Activated CD4-positive, alpha-beta memory T cell treated with anti-CD3 and anti-CD28 coated beads for 36 hours (primary cell): ENCODE measurements at regions of chr5 and their contacts with region 1.

Region 1: DNA sequence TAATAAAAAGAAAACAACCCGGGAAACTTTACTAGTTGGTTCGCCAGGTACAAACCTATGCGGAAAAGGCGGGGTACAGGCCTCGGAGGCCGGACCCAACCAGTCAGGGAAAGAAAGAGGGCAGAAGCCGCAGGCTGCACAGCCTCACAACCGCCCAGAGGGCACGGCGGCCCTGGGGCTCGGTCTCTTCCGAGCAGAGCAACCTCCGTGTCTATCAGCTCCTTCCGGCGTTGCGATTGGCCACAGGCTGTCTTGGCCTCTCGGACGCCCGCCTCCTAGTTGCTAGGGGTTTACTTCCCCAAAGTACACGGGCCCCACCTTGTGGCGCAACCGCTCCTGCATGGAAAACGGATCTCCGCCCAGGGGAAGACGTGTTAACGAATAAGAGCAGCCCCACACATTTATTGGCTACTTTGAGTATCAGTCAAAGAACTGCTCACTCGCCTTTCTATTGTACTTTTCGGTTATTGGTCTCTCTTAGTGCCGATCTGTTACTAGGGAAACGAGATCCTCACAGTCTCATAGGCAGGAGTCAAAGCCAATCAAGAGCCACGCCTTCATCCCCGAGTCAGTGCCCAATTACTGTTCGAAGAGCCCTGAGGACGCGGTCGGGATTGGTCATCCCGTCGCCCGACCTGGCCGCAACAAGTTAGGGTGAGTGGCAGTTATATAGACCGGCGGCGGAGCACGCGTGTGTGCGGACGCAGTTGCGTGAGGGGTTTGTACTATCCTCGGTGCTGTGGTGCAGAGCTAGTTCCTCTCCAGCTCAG is at the start of gene G3BP1:
- DNase-seq: peak; percentile 100
- H3K4me3 Mint-ChIP-seq: peak within 1 kb of the TSS; percentile 85
- H3K27ac Mint-ChIP-seq: peak within 1 kb of the TSS; percentile 75
- H3K4me1 Mint-ChIP-seq: peaks cover 33% of the 10 kb centered on the region
- H3K27me3 Mint-ChIP-seq: no peaks in the 10 kb centered on the region
- total RNA-seq, gene G3BP1: 237 TPM

Region 2: GRCh38 chr5:151213800-151214613 is 557.4 kb before region 1 on chr5:
- CTCF ChIA-PET with region 1: no interaction called
- POLR2A ChIA-PET with region 1: no interaction called
- intact Hi-C with region 1: loop called (anchors 5 kb)
- DNase-seq: peak; percentile 94
- H3K4me3 Mint-ChIP-seq: peak overlapping the region; percentile 82
- H3K27ac Mint-ChIP-seq: peak overlapping the region; percentile 97
- H3K4me1 Mint-ChIP-seq: peaks cover 69% of the 10 kb centered on the region
- H3K27me3 Mint-ChIP-seq: no peaks in the 10 kb centered on the region

Region 3: GRCh38 chr5:151499501-151500035 is 271.9 kb before region 1 on chr5:
- CTCF ChIA-PET with region 1: no interaction called
- POLR2A ChIA-PET with region 1: no interaction called
- intact Hi-C with region 1: no loop called
- DNase-seq: no peak
- H3K4me3 Mint-ChIP-seq: no peak overlapping the region
- H3K27ac Mint-ChIP-seq: no peak overlapping the region
- H3K4me1 Mint-ChIP-seq: peaks cover 5% of the 10 kb centered on the region
- H3K27me3 Mint-ChIP-seq: no peaks in the 10 kb centered on the region

Region 4: DNA sequence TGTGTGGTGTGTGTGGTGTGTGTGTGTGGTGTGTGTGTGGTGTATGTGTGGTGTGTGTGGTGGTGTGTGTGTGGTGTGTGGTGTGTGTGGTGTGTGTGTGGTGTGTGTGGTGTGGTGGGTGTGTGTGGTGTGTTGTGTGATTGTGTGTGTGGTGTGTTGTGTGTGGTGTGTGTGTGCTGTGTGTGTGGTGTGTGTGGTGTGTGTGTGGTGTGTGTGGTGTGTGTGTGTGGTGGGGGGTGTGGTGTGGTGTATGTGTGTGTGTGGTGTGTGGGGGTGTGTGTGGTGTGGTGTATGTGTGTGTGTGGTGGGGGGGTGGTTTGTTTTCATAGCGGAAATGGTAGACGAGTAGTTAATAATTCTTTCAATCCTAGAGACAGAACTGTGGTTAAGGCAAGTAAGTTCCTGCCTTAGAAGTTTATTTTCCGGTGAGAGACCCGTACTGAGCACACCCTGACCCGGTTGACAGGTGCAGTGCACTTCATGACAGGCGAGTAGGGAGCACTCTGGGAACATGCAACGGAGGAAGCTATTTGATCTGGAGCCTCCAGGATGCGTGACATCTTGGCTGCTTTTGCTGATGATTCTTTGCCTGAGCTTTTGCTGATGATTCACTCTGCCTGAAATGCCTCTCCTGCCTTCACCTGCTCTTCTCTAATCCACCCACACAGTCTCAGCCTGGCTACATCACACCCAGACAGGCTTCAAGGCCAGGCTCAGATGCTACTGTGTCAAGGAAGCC is 158.6 kb before region 1 on chr5:
- CTCF ChIA-PET with region 1: interaction called, 4 read pairs
- POLR2A ChIA-PET with region 1: no interaction called
- intact Hi-C with region 1: loop called (anchors 1 kb)
- DNase-seq: peak; percentile 75
- H3K4me3 Mint-ChIP-seq: peak overlapping the region; percentile 24
- H3K27ac Mint-ChIP-seq: peak overlapping the region; percentile 77
- H3K4me1 Mint-ChIP-seq: peaks cover 38% of the 10 kb centered on the region
- H3K27me3 Mint-ChIP-seq: no peaks in the 10 kb centered on the region

Region 5: GRCh38 chr5:151719228-151720000 is 52.0 kb before region 1 on chr5:
- CTCF ChIA-PET with region 1: no interaction called
- POLR2A ChIA-PET with region 1: interaction called, 5 read pairs
- intact Hi-C with region 1: loop called (anchors 1 kb)
- DNase-seq: peak; percentile 36
- H3K4me3 Mint-ChIP-seq: no peak overlapping the region
- H3K27ac Mint-ChIP-seq: no peak overlapping the region
- H3K4me1 Mint-ChIP-seq: peaks cover 10% of the 10 kb centered on the region
- H3K27me3 Mint-ChIP-seq: no peaks in the 10 kb centered on the region

Region 6: DNA sequence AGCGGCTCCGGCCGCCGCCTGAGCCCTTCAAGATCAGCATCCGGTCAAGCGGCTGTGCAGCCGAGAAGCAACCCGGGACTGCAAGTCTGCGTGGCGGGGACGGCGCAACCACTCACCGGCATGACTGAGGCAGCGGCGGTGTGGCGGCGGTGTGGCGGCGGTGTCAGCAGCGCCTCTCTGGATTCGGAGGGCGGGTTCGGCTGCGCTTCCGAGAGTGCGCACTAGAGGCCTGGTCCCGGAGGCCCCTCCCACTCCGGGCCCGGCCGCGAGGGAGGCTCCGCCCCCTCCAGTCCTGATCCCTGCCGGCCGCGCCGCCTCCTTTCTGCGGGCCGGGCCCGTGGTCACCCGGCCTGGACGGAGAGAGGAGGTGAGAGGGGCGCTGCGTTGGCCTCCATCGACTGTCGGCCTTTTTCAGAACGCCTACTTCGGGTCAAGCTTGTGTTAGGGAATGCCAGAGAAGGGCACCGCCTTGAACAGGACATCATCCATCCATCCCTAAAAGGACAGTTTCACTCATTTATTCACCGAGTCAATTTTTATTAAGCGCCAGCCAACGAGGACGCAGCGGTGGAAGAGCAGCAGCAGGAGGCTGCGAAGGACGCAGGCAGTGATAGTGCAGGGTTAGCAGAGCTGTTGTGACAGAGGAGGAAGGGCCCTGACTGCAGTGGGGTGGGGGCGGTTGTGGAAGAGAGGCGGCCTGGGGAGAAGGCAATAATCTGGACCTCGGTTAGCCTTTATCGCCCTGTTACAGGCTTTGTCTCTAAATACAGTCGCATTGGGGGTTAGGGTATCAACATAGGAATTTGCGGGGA is 12.8 kb before region 1 on chr5 and contains the start of gene ATOX1:
- CTCF ChIA-PET with region 1: interaction called, 20 read pairs
- POLR2A ChIA-PET with region 1: interaction called, 71 read pairs
- intact Hi-C with region 1: loop called (anchors 1 kb)
- DNase-seq: peak; percentile 94
- H3K4me3 Mint-ChIP-seq: peak within 1 kb of the TSS; percentile 77
- H3K27ac Mint-ChIP-seq: peak within 1 kb of the TSS; percentile 69
- H3K4me1 Mint-ChIP-seq: peaks cover 32% of the 10 kb centered on the region
- H3K27me3 Mint-ChIP-seq: no peaks in the 10 kb centered on the region
- total RNA-seq, gene ATOX1: 83.1 to 89.9 TPM